H1 (cell line): ENCODE measurements at regions of chr10 and their contacts with region 1.

Region 1: GRCh38 chr10:43407576-43408330 is 1.2 kb downstream of the HNRNPF start:
- DNase-seq: peak in 1 of 2 experiments; percentile 71
- H3K4me3 ChIP-seq: peak overlapping the region; percentile 61 to 97 (median 89)
- H3K27ac ChIP-seq: peak overlapping the region; percentile 99
- H3K4me1 ChIP-seq: peaks cover 0 to 9% (median 3%) of the 10 kb centered on the region in 4 experiments; a peak in 5 of 7 replicates
- H3K27me3 ChIP-seq: no peaks in the 10 kb centered on the region
- CTCF ChIP-seq: peak in 2 of 3 experiments; percentile 8 to 19; a peak in 2 of 4 replicates
- EP300 ChIP-seq: no peak
- POLR2A ChIP-seq: peak; percentile 23 to 91
- RAD21 ChIP-seq: no peak; a peak in 1 of 4 replicates

Region 2: GRCh38 chr10:43024942-43025700 is 382.6 kb before region 1 on chr10:
- CTCF ChIA-PET with region 1: no interaction called
- POLR2A ChIA-PET with region 1: no interaction called
- DNase-seq: peak in 1 of 2 experiments; percentile 35
- H3K4me3 ChIP-seq: no peak overlapping the region; a peak in 1 of 8 replicates
- H3K27ac ChIP-seq: no peak overlapping the region
- H3K4me1 ChIP-seq: peaks cover 10 to 23% (median 18%) of the 10 kb centered on the region in 4 experiments
- H3K27me3 ChIP-seq: peaks cover 0 to 26% (median 18%) of the 10 kb centered on the region in 4 experiments; a peak in 6 of 7 replicates
- CTCF ChIP-seq: no peak
- EP300 ChIP-seq: no peak
- POLR2A ChIP-seq: no peak
- RAD21 ChIP-seq: no peak

Region 3: GRCh38 chr10:43420369-43421200 is 12.8 kb after region 1 on chr10:
- CTCF ChIA-PET with region 1: interaction called, 3 read pairs
- POLR2A ChIA-PET with region 1: interaction called, 33 read pairs
- DNase-seq: peak in 1 of 2 experiments; percentile 73
- H3K4me3 ChIP-seq: peak overlapping the region; percentile 46 to 60 (median 47)
- H3K27ac ChIP-seq: 0 out of 2 replicates have a peak overlapping the region, but pooled peaks have one; percentile 17
- H3K4me1 ChIP-seq: peaks cover 0 to 5% (median 2%) of the 10 kb centered on the region in 4 experiments; a peak in 4 of 7 replicates
- H3K27me3 ChIP-seq: no peaks in the 10 kb centered on the region; a peak in 1 of 7 replicates
- CTCF ChIP-seq: peak in 2 of 3 experiments; percentile 13 to 35; a peak in 2 of 4 replicates
- EP300 ChIP-seq: no peak
- POLR2A ChIP-seq: peak; percentile 41 to 80
- RAD21 ChIP-seq: no peak; a peak in 1 of 4 replicates

Region 4: DNA sequence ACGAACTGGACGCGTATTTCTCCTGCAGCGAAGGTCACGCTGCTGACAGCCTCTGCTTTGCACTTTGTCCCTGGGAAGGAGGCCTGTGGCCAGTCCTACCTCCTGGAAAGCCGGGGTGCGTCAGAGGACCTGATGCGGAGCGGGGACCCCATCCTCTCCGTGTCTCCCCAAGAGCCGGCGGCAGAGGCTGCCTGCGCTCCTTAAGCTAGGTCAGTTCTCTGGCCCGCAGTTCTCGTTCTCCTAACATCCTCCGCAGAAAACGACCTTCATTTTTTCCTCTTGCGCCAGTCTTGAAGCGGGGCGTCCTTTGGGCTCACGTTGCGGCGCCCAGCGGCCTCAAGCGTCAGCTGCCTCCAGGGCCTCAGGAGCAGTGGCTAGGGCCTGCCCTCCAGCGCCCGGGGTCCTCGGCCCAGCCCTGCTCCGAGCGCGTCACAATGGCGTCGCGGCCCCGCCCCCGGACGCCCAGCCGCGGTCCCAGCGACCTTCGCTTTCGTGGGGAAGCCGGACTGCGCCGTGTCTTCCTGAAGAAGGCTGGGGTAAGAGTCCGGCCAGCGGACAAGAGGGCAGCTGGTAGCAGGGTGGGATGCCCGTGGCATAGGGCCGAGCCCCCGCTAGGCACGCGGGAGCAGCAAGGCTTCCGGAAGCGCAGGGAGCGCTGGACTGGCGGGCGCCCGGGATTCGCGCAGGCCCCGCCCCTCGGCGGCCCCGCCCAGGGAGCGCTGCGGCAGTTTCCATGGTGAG is 28.8 kb after region 1 on chr10 and contains the start of gene ZNF487:
- CTCF ChIA-PET with region 1: no interaction called
- POLR2A ChIA-PET with region 1: interaction called, 19 read pairs
- DNase-seq: peak; percentile 51 to 94
- H3K4me3 ChIP-seq: peak within 1 kb of the TSS; percentile 66 to 81 (median 79)
- H3K27ac ChIP-seq: peak within 1 kb of the TSS; percentile 96
- H3K4me1 ChIP-seq: no peaks in the 10 kb centered on the region
- H3K27me3 ChIP-seq: no peaks in the 10 kb centered on the region
- CTCF ChIP-seq: peak in 2 of 3 experiments; percentile 11 to 22; a peak in 2 of 4 replicates
- EP300 ChIP-seq: no peak
- POLR2A ChIP-seq: peak; percentile 84 to 89
- RAD21 ChIP-seq: peak; percentile 17 to 42; a peak in 1 of 4 replicates
- total RNA-seq, gene ZNF487: 1.9 TPM in 2 replicates